ENCODE measurements at regions of chr9 and their contacts with region 1.

Region 1: DNA sequence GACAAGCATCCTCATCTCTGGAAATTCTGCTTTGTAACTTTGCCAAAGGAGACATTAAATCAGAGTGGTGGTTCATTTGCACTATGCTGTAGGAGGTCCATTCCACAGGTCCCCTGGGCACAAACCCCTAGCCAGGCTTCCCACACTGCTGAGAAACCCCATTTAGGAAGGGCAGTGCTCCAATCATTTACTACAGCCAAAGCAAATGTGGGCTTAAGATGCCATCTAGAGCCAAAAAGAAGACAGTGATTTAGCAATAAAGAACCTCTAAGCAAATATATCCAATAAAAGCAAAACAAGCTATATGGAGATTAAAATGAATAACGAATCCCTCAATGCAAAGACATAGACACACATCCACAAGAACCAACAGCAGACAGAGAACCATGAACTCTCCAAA is 129.0 kb upstream of the ALDH1B1 start:
- DNase-seq: no peak
- ATAC-seq: no peak

Region 2: GRCh38 chr9:38154501-38155421 is 108.8 kb before region 1 on chr9:
- intact Hi-C with region 1: no loop called
- DNase-seq: no peak
- ATAC-seq: no peak

Region 3: DNA sequence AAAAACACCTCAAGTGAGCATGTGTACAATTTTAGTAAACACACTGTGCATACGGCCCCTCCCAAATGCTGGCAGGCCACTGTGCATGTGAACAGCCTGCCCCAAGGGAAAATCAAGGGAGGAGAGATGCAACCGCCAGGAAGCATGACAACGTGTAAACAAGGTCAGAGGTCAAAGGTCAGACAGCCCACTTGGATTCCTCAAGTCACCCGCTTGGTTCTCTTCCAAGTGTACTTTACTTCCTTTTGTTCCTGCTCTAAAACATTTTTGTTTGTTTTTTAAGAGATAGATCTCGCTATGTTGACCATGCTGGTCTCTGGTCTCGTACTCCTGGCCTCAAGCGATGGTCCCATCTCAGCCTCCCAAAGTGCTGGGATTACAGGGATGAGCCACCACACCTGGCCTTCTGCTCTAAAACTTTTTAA is 67.8 kb before region 1 on chr9:
- intact Hi-C with region 1: loop called (anchors 10 kb)
- DNase-seq: no peak
- ATAC-seq: no peak

Measured in Right ventricle myocardium inferior (tissue), 1 donor.